ENCODE measurements at regions of chr9 and their contacts with region 1.

Region 1: DNA sequence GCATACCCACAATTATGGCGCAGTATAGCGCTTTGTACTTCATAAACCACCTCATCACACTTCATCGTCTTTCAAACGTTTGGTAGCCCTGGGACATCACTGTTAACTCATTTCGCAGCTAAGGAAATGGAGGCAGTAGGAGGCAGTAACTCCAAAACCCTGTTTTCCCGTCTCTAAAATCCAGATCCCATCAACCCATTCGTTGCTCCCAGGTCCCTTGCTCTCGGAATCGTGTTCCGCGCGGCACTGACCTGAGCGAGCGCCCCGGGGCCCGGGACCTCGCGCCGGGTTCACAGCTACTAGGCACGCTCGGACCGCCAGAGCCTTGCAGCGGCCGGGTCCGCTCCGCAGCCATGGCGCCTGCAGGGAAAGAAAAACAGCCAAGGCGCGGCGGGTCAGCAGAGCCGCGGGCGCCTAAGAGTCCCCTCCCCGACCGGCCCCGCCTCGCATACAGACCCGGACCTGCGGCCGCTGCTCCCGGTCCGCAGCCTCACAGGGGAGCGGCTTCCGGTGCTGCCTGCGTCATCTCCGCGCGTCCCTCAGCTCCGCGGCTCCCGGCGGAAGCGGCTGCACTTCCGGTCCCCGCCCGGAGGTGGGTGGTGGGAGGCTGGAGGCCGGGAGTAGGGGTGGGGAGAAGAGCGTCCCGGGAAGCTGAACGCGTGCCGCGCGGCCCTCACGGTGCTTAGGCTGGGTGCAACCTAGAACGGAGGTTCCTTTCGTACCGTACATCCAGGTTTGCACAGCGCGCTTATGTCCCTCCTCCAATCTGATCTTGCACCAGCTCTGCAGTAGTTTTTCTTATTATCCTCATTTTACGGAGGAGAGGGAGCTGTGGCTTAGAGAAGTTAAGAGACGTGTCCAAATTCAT is at the start of gene FBXW2:
- DNase-seq: peak; percentile 94
- H3K4me3 ChIP-seq: peak within 1 kb of the TSS; percentile 96 to 98
- H3K27ac ChIP-seq: peak within 1 kb of the TSS; percentile 76 to 88
- H3K4me1 ChIP-seq: peaks cover 11% of the 10 kb centered on the region
- H3K27me3 ChIP-seq: no peaks in the 10 kb centered on the region
- CTCF ChIP-seq: peak in 2 of 3 experiments; percentile 29 to 35
- POLR2A ChIP-seq: peak; percentile 73
- total RNA-seq, gene FBXW2: 52.9 to 58.7 TPM

Region 2: GRCh38 chr9:120689860-120690259 is 103.3 kb before region 1 on chr9:
- intact Hi-C with region 1: no loop called
- DNase-seq: no peak
- H3K4me3 ChIP-seq: no peak overlapping the region
- H3K27ac ChIP-seq: no peak overlapping the region
- H3K4me1 ChIP-seq: peaks cover 6% of the 10 kb centered on the region
- H3K27me3 ChIP-seq: no peaks in the 10 kb centered on the region
- CTCF ChIP-seq: no peak
- POLR2A ChIP-seq: no peak

Region 3: GRCh38 chr9:120842690-120843499 is 49.8 kb after region 1 on chr9 and contains the start of gene PSMD5:
- intact Hi-C with region 1: no loop called
- DNase-seq: peak; percentile 99
- H3K4me3 ChIP-seq: peak within 1 kb of the TSS; percentile 80 to 85
- H3K27ac ChIP-seq: peak within 1 kb of the TSS; percentile 88 to 95
- H3K4me1 ChIP-seq: peaks cover 9% of the 10 kb centered on the region
- H3K27me3 ChIP-seq: no peaks in the 10 kb centered on the region
- CTCF ChIP-seq: peak in 1 of 3 experiments; percentile 5
- POLR2A ChIP-seq: peak; percentile 7
- total RNA-seq, gene PSMD5: 39.0 to 45.0 TPM

Region 4: DNA sequence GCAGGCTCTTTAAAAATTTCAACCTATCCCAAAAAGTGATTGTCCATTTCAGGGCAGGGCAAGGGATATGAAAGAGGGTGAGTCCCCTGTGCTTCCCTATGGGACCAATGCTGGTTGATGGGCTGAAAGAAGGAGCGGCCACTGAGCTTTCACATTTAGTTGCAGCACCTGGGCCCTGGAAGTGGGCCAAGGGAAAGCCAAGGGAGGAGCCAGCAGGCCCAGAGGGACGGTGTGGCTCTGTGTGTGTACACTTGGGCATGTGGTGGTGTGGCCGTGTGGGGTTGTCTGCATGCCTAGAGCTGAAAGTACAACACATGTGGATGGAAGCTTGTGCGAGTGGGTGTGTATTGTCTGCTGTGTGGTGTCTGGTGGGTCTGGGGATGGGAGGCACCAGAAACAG is 63.6 kb after region 1 on chr9:
- intact Hi-C with region 1: loop called (anchors 10 kb)
- DNase-seq: no peak
- H3K4me3 ChIP-seq: no peak overlapping the region
- H3K27ac ChIP-seq: no peak overlapping the region
- H3K4me1 ChIP-seq: no peaks in the 10 kb centered on the region
- H3K27me3 ChIP-seq: no peaks in the 10 kb centered on the region
- CTCF ChIP-seq: no peak
- POLR2A ChIP-seq: no peak

Measured in testis (tissue), 5 donors.